ENCODE measurements at regions of chr20 and their contacts with region 1.

Region 1: DNA sequence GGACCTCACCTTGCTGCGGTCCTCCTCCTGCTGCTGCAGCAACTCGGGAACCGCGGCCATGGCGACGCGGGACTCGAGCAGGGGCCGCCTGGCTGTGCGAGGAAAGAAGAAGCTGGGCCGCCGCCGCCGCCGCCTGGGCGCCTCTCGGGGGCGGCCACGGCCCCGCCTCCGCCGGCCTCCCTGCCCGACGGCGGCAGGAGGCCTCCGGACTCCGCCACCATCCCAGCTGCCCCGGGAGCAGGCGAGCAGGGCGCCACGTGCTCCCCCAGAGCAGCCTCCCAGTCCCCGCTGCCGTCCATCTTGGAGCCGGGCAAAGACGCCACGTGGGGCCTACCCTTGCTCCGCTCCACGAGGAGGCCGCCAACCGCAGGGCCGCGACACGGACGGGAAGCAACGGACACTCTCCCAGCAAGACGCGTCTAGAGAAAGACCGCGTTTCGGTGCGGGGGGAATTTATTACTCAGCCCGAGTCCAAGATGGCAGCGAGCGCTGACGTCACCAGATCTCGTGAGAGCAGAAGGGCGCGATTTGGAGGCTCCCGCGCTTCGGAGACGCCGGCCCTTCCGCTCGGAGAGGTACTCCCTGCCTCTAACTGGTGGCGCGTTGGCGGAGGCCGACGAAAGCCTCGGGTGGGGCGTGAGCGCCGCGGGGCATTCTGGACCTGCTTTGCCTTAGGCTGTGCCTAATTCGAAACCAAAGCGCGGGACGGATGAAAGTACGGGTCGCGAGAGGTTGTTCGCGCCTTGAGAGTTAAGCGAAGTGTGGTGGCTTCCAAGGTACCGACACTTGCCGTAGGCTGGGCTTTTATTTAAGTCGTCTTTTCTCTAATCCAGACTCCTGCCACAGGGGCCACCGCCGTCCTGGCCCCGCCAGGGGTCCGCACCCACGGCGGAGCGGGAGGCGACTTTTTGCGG is at the starts of genes MGME1 and SNX5:
- DNase-seq: peak; percentile 100
- total RNA-seq, gene MGME1: 9.5 TPM
- total RNA-seq, gene SNX5: 42.1 TPM

Region 2: DNA sequence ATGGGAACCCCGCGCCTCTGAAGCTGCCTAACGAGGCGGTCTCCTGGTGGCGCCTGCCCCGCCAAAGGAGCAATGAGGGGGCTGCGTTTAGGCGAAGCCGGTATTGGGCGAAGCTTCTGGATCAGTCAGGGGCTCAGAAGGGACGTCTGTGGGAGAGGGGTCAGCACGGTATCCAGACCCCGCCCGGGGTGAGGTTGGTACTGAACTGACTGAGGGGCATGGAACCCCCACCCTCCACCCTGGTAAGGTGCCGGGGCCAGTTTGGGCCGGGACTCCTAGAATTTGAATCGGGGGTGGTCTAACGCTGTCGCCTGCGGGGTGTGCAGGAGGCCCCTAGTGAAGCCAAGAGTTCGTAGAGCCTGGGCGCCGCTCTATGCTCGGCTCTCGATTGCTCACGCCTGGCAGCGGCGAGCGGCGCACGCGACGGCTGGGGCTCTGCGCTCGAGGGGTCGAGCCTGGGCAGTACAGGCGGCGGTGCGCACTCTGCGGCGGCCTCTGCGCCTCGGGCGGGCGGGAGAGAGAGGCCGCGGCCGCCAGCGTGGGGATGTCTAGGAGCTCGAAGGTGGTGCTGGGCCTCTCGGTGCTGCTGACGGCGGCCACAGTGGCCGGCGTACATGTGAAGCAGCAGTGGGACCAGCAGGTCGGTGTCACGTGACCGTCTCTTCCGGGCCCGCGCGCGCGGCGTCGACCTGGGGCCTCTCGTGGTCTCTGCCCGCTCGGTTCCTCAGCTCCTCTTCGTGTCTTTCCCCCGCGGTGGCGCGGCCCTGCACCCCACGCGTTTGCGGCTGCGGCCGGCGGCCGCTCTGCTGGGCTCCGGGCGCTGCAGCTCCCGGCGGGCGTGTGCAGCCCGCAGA is 169.0 kb after region 1 on chr20 and contains the starts of genes KAT14 and PET117:
- intact Hi-C with region 1: loop called (anchors 5 kb)
- DNase-seq: peak; percentile 95
- total RNA-seq, gene KAT14: 9.7 TPM
- total RNA-seq, gene PET117: 11.0 TPM